ENCODE measurements at regions of chr21 and their contacts with region 1.

Region 1: GRCh38 chr21:37338671-37339551 is 27.7 kb upstream of the DYRK1A start:
- DNase-seq: no peak
- ATAC-seq: no peak
- H3K4me3 ChIP-seq: no peak overlapping the region
- H3K4me3 Mint-ChIP-seq: no peak overlapping the region
- H3K27ac ChIP-seq: no peak overlapping the region
- H3K27ac Mint-ChIP-seq: no peak overlapping the region
- H3K4me1 ChIP-seq: no peaks in the 10 kb centered on the region
- H3K4me1 Mint-ChIP-seq: no peaks in the 10 kb centered on the region
- H3K27me3 ChIP-seq: no peaks in the 10 kb centered on the region
- H3K27me3 Mint-ChIP-seq: peaks cover 0 to 3% of the 10 kb centered on the region in 2 donors

Region 2: DNA sequence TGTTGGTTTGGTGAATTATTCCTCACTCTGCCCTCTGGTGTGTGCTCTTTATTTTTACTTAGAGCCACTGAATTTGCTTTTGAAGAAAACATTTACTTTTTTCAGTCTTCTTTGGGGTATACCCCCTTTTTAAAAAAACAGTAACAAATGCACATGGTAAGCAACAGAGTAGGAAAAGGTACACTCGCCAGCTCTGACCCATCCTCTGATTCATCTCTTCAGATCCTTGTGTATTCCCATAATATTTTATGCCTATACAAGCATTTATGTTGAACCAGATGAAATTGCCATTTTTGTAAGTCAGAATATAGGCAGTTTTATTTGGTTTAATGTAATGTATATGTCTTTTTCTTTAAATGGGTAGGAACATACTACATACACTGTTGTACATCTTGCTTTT is 237.5 kb before region 1 on chr21:
- CTCF ChIA-PET with region 1: no interaction called
- POLR2A ChIA-PET with region 1: no interaction called
- DNase-seq: no peak
- ATAC-seq: no peak
- H3K4me3 ChIP-seq: no peak overlapping the region
- H3K4me3 Mint-ChIP-seq: no peak overlapping the region
- H3K27ac ChIP-seq: no peak overlapping the region
- H3K27ac Mint-ChIP-seq: no peak overlapping the region
- H3K4me1 ChIP-seq: no peaks in the 10 kb centered on the region
- H3K4me1 Mint-ChIP-seq: peaks cover 2 to 13% (median 4%) of the 10 kb centered on the region in 3 donors
- H3K27me3 ChIP-seq: no peaks in the 10 kb centered on the region
- H3K27me3 Mint-ChIP-seq: no peaks in the 10 kb centered on the region

Region 3: GRCh38 chr21:37322084-37322483 is 16.8 kb before region 1 on chr21:
- CTCF ChIA-PET with region 1: no interaction called
- POLR2A ChIA-PET with region 1: no interaction called
- DNase-seq: no peak
- ATAC-seq: no peak
- H3K4me3 ChIP-seq: no peak overlapping the region
- H3K4me3 Mint-ChIP-seq: no peak overlapping the region
- H3K27ac ChIP-seq: no peak overlapping the region
- H3K27ac Mint-ChIP-seq: no peak overlapping the region
- H3K4me1 ChIP-seq: no peaks in the 10 kb centered on the region
- H3K4me1 Mint-ChIP-seq: no peaks in the 10 kb centered on the region
- H3K27me3 ChIP-seq: no peaks in the 10 kb centered on the region
- H3K27me3 Mint-ChIP-seq: peaks cover 0 to under 1% of the 10 kb centered on the region in 2 donors

Region 4: GRCh38 chr21:37521658-37522057 is 182.7 kb after region 1 on chr21:
- CTCF ChIA-PET with region 1: no interaction called
- POLR2A ChIA-PET with region 1: interaction called in 1 of 2 experiments, 10 read pairs
- DNase-seq: no peak
- ATAC-seq: no peak
- H3K4me3 ChIP-seq: no peak overlapping the region
- H3K4me3 Mint-ChIP-seq: no peak overlapping the region
- H3K27ac ChIP-seq: no peak overlapping the region
- H3K27ac Mint-ChIP-seq: no peak overlapping the region
- H3K4me1 ChIP-seq: no peaks in the 10 kb centered on the region
- H3K4me1 Mint-ChIP-seq: peaks cover 0 to 8% (median 7%) of the 10 kb centered on the region in 3 donors
- H3K27me3 ChIP-seq: no peaks in the 10 kb centered on the region
- H3K27me3 Mint-ChIP-seq: no peaks in the 10 kb centered on the region

Region 5: DNA sequence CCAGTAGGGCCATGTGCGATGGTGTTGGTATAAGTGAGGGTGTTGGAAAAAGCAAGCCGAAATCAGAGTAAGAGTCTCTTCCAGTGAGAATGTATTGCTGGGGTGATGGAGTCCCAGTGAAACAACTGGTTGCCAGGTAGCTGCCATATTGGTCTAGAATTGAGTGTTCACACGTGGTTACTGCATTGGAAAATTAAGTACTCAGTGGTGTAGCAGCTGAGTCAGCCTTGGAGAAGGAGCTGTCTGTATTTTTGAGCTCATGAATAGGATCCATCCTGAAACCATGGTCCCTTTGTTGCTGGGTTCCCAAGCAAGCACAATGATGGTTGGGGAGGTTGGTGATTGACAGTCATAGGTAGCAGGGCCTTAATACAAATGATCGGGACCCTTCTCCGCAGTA is 263.0 kb after region 1 on chr21:
- CTCF ChIA-PET with region 1: no interaction called
- POLR2A ChIA-PET with region 1: no interaction called
- DNase-seq: no peak
- ATAC-seq: no peak
- H3K4me3 ChIP-seq: no peak overlapping the region
- H3K4me3 Mint-ChIP-seq: no peak overlapping the region
- H3K27ac ChIP-seq: no peak overlapping the region
- H3K27ac Mint-ChIP-seq: no peak overlapping the region
- H3K4me1 ChIP-seq: no peaks in the 10 kb centered on the region
- H3K4me1 Mint-ChIP-seq: no peaks in the 10 kb centered on the region
- H3K27me3 ChIP-seq: peaks cover 0 to 8% of the 10 kb centered on the region in 2 experiments
- H3K27me3 Mint-ChIP-seq: peaks cover 18 to 22% of the 10 kb centered on the region in 2 donors

Measured in T-cell (primary cell).